ENCODE measurements at regions of chr16 and their contacts with region 1.

Region 1: GRCh38 chr16:89737341-89738071 is 16.2 kb downstream of the ZNF276 start:
- DNase-seq: peak; percentile 70
- H3K4me3 Mint-ChIP-seq: peak overlapping the region; percentile 32
- H3K27ac Mint-ChIP-seq: peak overlapping the region; percentile 78
- H3K4me1 Mint-ChIP-seq: peaks cover 30% of the 10 kb centered on the region
- H3K27me3 Mint-ChIP-seq: no peaks in the 10 kb centered on the region

Region 2: GRCh38 chr16:89761304-89761922 is 23.9 kb after region 1 on chr16:
- CTCF ChIA-PET with region 1: no interaction called
- POLR2A ChIA-PET with region 1: interaction called, 10 read pairs
- DNase-seq: no peak
- H3K4me3 Mint-ChIP-seq: peak overlapping the region; percentile 76
- H3K27ac Mint-ChIP-seq: peak overlapping the region; percentile 87
- H3K4me1 Mint-ChIP-seq: peaks cover 54% of the 10 kb centered on the region
- H3K27me3 Mint-ChIP-seq: no peaks in the 10 kb centered on the region

Measured in activated CD4-positive, alpha-beta memory T cell treated with anti-CD3 and anti-CD28 coated beads, Interleukin-2, amount 10 ng/mL, durations not matched to agents 7 days and 5 days (primary cell).